HepG2 (cell line): ENCODE measurements at regions of chr16 and their contacts with region 1.

Region 1: GRCh38 chr16:70725912-70726828 is 40.3 kb upstream of the MTSS2 start:
- DNase-seq: no peak
- ATAC-seq: no peak
- H3K4me3 ChIP-seq: peak overlapping the region; percentile 27 to 73 (median 52); a peak in 5 of 6 replicates
- H3K27ac ChIP-seq: peak overlapping the region; percentile 99
- H3K4me1 ChIP-seq: peaks cover 45% of the 10 kb centered on the region
- H3K27me3 ChIP-seq: no peaks in the 10 kb centered on the region
- CTCF ChIP-seq: no peak
- EP300 ChIP-seq: no peak
- POLR2A ChIP-seq: 0 out of 4 replicates have a peak, but pooled peaks of 1 of the 2 experiments have one; percentile 5
- RAD21 ChIP-seq: no peak

Region 2: DNA sequence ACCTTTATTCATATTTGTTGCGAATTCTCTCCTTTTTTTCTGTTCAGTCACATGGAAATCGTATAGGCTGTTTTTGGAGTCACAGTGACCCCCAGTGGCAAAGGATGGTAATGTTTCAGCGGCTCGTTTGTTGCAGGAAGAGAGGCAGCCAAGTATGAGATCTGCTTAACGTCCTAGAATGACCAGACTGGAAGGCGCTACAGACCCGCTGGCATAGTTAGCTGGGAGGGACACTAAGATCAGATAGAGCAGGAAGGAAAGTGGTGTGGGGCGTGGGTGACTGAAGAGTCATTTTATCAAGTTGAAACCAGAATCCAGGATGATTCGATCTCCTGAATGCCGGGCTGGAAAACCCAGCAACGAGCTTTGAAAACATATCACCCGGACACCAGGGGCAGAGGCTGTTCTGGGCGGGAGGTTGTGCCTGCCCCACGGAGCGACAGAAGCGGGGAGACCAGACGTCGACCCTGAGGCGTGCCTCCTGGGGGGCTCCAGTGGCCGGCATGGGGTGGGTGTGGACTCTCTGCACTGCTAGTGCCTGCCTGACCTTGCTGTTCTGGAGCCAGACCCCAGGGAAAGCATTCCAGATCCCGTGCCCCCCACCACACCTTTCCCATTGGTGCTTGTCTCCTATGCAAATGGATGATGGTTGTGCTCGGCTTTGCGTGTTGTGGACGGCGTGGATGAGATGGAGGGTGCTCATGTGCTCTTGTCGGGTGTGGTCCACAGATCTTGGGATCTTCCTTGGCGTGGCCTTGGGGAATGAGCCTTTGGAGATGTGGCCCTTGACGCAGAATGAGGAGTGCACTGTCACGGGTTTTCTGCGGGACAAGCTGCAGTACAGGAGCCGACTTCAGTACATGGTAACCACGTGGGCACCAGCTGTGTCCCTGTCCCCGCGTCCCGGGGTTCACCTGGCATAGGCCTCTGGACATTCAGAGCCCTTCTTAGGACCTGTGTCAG is 72.1 kb before region 1 on chr16:
- CTCF ChIA-PET with region 1: no interaction called
- POLR2A ChIA-PET with region 1: interaction called, 10 read pairs
- in situ Hi-C with region 1: no loop called
- intact Hi-C with region 1: no loop called
- DNase-seq: peak; percentile 86
- ATAC-seq: peak; percentile 51
- H3K4me3 ChIP-seq: peak overlapping the region; percentile 52 to 74 (median 70)
- H3K27ac ChIP-seq: no peak overlapping the region
- H3K4me1 ChIP-seq: peaks cover 39% of the 10 kb centered on the region
- H3K27me3 ChIP-seq: peaks cover 1 to 19% of the 10 kb centered on the region in 2 experiments; a peak in 4 of 5 replicates
- CTCF ChIP-seq: peak; percentile 96
- EP300 ChIP-seq: no peak
- POLR2A ChIP-seq: no peak
- RAD21 ChIP-seq: peak; percentile 85

Region 3: DNA sequence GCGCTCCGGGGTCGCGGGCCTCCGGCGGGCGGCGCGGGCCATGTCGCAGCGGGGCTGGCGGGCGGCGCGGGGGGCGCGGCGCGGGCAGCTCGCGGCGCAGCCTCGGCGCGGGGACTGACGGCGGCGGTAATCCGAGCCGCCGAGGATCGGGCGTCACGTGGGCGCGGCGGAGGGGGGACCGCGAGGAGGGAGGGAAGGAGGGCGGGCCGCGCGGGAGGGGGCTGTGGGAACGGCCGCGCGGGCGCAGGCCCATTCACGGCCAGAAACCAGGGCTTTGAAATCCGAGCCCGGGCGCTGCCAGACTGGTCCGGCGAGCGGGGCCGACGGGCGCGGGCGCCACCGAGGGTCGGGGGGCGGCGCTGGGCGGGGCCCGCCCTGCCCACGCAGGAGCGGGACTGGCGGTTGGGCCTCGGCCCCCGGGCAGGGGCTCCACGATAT is 40.2 kb before region 1 on chr16 and contains the start of gene MTSS2:
- CTCF ChIA-PET with region 1: no interaction called
- POLR2A ChIA-PET with region 1: interaction called, 536 read pairs
- in situ Hi-C with region 1: loop called (anchors 5 kb)
- intact Hi-C with region 1: loop called (anchors 1 kb)
- DNase-seq: peak; percentile 80
- ATAC-seq: peak; percentile 16
- H3K4me3 ChIP-seq: peak within 1 kb of the TSS; percentile 86 to 93 (median 91)
- H3K27ac ChIP-seq: peak within 1 kb of the TSS; percentile 91
- H3K4me1 ChIP-seq: peaks cover 80% of the 10 kb centered on the region
- H3K27me3 ChIP-seq: no peaks in the 10 kb centered on the region; a peak in 1 of 5 replicates
- CTCF ChIP-seq: no peak
- EP300 ChIP-seq: peak in 1 of 2 experiments; percentile 54; a peak in 2 of 4 replicates
- POLR2A ChIP-seq: peak in 1 of 2 experiments; percentile 18; a peak in 1 of 4 replicates
- RAD21 ChIP-seq: peak; percentile 67
- total RNA-seq, gene MTSS2: 84.6 and 132 TPM in 2 replicates

Region 4: GRCh38 chr16:70708361-70709246 is 17.6 kb before region 1 on chr16:
- CTCF ChIA-PET with region 1: no interaction called
- POLR2A ChIA-PET with region 1: interaction called, 134 read pairs
- in situ Hi-C with region 1: no loop called
- intact Hi-C with region 1: loop called (anchors 1 kb)
- DNase-seq: no peak
- ATAC-seq: no peak
- H3K4me3 ChIP-seq: no peak overlapping the region
- H3K27ac ChIP-seq: no peak overlapping the region
- H3K4me1 ChIP-seq: peaks cover 68% of the 10 kb centered on the region
- H3K27me3 ChIP-seq: no peaks in the 10 kb centered on the region
- CTCF ChIP-seq: no peak
- EP300 ChIP-seq: no peak
- POLR2A ChIP-seq: no peak
- RAD21 ChIP-seq: no peak

Region 5: GRCh38 chr16:70746708-70747424 is 20.7 kb after region 1 on chr16:
- CTCF ChIA-PET with region 1: no interaction called
- POLR2A ChIA-PET with region 1: interaction called, 357 read pairs
- in situ Hi-C with region 1: no loop called
- intact Hi-C with region 1: loop called (anchors 2 kb)
- DNase-seq: peak; percentile 99
- ATAC-seq: peak; percentile 90
- H3K4me3 ChIP-seq: peak overlapping the region in 2 of 3 experiments; percentile 3 to 56; a peak in 2 of 6 replicates
- H3K27ac ChIP-seq: peak overlapping the region; percentile 93
- H3K4me1 ChIP-seq: peaks cover 56% of the 10 kb centered on the region
- H3K27me3 ChIP-seq: no peaks in the 10 kb centered on the region
- CTCF ChIP-seq: peak; percentile 40
- EP300 ChIP-seq: peak; percentile 92; a peak in 3 of 4 replicates
- POLR2A ChIP-seq: peak; percentile 70 to 75
- RAD21 ChIP-seq: no peak; the same call in 1 of the 2 replicates